Ascending aorta (tissue), 2 donors: ENCODE measurements at regions of chr20 and their contacts with region 1.

Region 1: DNA sequence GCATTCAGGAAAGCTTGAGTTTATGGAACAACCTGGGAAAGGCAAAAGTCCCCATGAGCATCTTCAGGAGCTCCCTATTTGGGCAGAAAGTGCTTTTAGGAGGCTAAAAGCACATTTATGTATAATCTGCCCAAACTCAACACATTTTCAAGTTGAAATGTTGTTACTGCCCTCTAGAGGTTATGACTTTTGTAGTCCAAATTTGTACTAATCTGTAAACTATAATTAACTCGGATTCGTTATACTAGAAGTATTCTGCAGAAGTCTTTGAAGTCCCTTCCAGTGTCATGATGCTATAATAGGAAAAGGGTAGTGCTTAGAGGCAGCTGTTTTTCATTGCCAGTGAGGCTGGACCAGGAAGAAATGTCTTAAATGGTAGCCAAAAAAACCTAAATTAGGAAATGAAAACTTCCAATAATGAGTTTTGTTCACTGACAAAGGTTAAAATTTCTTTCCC is 44.8 kb upstream of the EMILIN3 start:
- DNase-seq: no peak
- H3K4me3 ChIP-seq: no peak overlapping the region
- H3K27ac ChIP-seq: peak overlapping the region; percentile 73 to 76
- H3K4me1 ChIP-seq: peaks cover 0 to 9% of the 10 kb centered on the region in 2 donors
- H3K27me3 ChIP-seq: no peaks in the 10 kb centered on the region
- CTCF ChIP-seq: peak; percentile 15 to 47 (median 45)

Region 2: DNA sequence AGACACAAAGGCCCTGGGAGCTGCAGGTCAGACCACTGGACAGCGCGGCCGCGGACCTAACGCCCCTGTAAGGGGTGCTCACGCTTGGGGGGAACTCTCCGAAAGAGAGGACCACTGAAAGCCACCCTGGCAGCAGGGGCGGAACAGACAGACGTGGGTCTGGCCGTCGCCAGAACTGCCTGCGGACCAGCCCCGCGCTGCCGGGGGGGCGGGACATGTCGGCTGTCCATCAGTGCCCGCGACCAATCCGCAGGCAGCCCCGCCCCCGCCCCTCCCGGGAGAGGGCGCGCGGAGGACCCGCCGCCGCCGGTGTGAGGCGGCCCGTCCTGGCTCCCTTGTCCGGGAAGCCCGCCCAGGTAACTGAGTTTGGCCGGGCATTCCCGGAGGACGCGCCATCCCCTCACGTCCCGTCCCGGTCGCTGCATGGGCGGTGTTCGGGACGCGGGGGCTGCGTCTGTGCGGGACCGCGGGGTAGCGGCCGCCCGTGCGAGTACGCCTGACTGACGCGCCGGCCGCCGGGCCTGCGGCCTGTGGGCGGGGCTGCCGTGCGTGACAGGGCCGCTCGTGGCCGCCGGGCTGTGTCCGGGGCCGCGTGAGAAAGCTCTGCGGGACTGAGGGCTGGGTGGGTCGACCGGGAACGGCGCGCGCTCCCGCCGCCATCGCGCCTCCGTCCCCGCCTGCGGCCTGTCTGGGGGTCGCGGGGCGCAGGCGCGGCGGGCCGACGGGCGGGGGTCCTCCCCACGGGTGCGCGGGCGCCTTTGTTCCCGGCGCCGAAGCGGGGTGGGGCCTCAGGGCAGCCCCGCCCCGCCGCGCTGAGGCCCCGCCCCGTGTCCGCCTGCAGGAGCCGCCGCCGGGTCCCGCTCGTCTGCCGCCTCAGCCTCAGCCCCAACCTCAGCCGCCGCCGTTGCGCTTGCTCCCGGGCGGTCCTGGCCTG is 274.5 kb before region 1 on chr20 and contains the start of gene PLCG1:
- intact Hi-C with region 1: loop called (anchors 5 kb)
- DNase-seq: peak; percentile 46 to 94
- H3K4me3 ChIP-seq: peak within 1 kb of the TSS; percentile 86 to 99
- H3K27ac ChIP-seq: peak within 1 kb of the TSS; percentile 98
- H3K4me1 ChIP-seq: peaks cover 0 to 35% of the 10 kb centered on the region in 2 donors
- H3K27me3 ChIP-seq: no peaks in the 10 kb centered on the region
- CTCF ChIP-seq: peak in 1 of 3 experiments; percentile 20
- total RNA-seq, gene PLCG1: 168 TPM

Region 3: GRCh38 chr20:41173161-41173721 is 238.2 kb before region 1 on chr20:
- intact Hi-C with region 1: loop called (anchors 5 kb)
- DNase-seq: peak; percentile 40 to 91
- H3K4me3 ChIP-seq: no peak overlapping the region
- H3K27ac ChIP-seq: peak overlapping the region; percentile 82 to 83
- H3K4me1 ChIP-seq: peaks cover 8 to 54% of the 10 kb centered on the region in 2 donors
- H3K27me3 ChIP-seq: no peaks in the 10 kb centered on the region
- CTCF ChIP-seq: peak; percentile 86 to 96 (median 90)

Region 4: GRCh38 chr20:41339507-41340326 is 71.7 kb before region 1 on chr20:
- intact Hi-C with region 1: loop called (anchors 1 kb)
- DNase-seq: peak in 1 of 2 donors; percentile 91
- H3K4me3 ChIP-seq: peak overlapping the region; percentile 48 to 55
- H3K27ac ChIP-seq: peak overlapping the region; percentile 81 to 82
- H3K4me1 ChIP-seq: peaks cover 4 to 9% of the 10 kb centered on the region in 2 donors
- H3K27me3 ChIP-seq: no peaks in the 10 kb centered on the region
- CTCF ChIP-seq: peak; percentile 98 to 99 (median 99)

Region 5: DNA sequence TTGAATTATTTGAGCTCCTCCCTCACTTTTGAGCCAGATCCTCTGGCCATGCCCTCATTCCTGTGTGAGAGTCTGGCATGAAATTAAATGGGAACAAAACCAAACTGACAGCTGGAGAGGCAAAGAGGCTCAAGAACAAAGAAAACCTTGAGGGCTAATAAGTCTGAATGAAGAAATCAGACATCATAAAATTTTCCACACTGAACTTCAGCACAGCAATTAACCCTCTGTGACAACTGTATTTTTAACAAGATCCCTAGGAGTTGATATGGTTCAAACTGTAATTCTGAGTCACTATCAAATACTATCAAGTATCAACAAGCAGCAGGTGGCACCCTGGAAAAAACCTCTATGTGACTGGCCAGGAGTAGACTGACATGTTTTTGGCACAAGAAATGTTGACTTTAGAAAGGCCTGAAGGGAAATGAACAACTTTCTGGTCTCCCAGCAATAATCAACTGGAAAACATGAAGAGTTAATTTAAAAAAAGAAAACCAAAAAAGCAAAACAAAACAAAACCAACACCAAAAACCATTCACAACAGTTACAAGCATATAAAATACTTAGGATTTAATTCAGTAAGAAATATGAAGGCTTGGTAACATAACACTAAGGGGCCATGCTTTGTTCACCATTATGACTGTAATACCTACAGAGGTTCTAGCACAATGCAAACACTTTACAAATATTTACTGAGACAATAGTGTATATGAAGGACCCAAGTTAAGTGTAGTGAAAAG is 64.8 kb after region 1 on chr20:
- intact Hi-C with region 1: no loop called
- DNase-seq: no peak
- H3K4me3 ChIP-seq: no peak overlapping the region
- H3K27ac ChIP-seq: peak overlapping the region in 1 of 2 donors; percentile 20
- H3K4me1 ChIP-seq: no peaks in the 10 kb centered on the region
- H3K27me3 ChIP-seq: no peaks in the 10 kb centered on the region
- CTCF ChIP-seq: no peak

Region 6: DNA sequence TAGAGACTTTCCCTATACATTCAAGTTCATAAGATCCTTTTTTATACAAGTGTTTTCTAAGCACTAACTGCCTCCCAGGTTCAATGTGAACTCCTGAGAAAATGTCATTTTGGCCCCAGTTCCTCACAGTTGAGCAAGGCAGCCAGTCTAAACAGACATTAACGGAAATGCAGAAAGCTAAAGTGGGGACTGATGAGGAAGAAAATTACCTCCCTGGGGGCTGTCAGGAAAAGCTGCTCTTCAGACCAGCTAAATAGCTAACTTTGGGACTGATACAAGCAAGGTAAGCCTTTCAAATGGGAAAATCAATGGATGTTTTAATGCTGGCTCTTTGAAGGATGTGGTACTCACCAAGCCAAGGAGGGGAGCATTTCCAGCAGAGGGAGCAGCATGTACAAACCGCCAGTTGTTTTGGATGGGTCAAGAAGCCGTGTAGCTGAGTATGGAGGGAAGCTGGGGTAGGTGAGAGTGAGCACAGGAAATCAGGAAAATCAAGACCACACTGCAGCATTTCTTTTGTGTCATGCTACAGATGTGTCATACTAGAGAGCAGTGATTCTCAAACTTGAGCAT is 387.6 kb after region 1 on chr20:
- intact Hi-C with region 1: no loop called
- DNase-seq: no peak
- H3K4me3 ChIP-seq: no peak overlapping the region
- H3K27ac ChIP-seq: no peak overlapping the region
- H3K4me1 ChIP-seq: no peaks in the 10 kb centered on the region
- H3K27me3 ChIP-seq: no peaks in the 10 kb centered on the region
- CTCF ChIP-seq: no peak